ENCODE measurements at regions of chr16 and their contacts with region 1.

Region 1: DNA sequence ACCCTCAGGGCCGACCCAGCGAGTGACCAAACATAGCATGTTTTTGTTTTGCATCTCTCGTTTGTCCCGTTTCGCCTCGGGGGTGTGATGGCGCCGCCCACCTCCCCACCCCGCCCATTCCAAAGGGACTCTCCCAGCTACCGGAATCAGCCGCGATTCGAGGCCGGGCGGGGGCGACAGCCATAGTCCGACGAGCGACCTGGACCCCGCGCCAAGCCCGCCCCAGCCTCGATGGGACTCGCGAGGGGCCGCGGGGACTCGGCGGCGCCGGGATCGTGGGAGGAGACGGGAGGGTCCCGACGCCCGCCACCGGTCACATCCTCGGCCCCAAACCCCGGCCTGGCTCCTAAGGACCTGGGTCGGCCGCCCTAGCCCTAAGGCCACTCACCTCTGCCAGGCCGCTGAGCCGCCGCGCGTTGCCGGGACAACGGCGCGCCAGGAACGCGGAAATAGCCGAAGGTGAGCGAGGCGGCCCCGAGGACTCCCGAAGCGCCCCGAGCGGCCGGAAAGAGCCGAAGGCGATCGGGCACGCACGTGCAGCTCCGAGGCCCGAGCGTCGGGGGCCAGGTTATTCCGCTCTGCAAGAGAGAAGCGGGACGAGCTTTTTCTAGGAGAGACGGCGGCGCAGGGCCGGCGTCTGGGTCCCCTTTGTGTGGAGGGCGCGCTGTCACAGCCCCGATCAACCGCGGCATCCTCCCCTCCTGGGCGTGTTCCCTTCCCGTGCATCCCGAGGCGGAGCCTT is 1.4 kb downstream of the IFT140 start:
- DNase-seq: peak; percentile 84
- H3K4me3 ChIP-seq: peak overlapping the region; percentile 78 to 85 (median 83)
- H3K27ac ChIP-seq: peak overlapping the region; percentile 74
- H3K4me1 ChIP-seq: peaks cover 22% of the 10 kb centered on the region
- H3K27me3 ChIP-seq: no peaks in the 10 kb centered on the region
- CTCF ChIP-seq: no peak

Region 2: DNA sequence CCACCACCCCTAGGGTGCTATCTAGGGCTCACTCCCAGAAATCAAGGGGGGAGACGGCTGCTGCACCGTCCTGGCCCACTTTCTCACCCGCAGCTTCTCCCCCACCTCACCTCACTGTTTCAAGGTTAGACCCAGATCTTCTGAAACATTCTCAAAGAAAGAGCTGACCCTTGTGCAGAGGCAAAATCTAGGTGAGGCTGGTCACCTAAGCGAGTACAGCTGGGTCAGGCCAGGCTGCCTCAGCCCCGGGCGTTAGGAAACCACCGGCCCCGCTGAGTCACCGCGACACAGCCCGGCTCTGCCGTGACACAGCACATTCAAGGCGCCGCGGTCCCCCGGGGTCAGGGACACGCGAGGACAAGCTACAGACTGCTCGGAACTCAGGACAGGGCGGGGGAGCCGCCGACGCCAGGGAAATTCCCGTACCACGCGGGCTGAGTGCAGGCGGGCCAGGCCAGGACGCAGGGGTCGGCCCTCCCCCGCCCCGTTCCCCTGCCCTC is 231.6 kb before region 1 on chr16:
- CTCF ChIA-PET with region 1: no interaction called
- dilution Hi-C with region 1: no loop called
- in situ Hi-C with region 1: no loop called
- intact Hi-C with region 1: loop called (anchors 10 kb)
- DNase-seq: peak; percentile 85
- H3K4me3 ChIP-seq: peak overlapping the region; percentile 36 to 47 (median 45)
- H3K27ac ChIP-seq: peak overlapping the region; percentile 57
- H3K4me1 ChIP-seq: peaks cover 14% of the 10 kb centered on the region
- H3K27me3 ChIP-seq: no peaks in the 10 kb centered on the region
- CTCF ChIP-seq: no peak

Region 3: DNA sequence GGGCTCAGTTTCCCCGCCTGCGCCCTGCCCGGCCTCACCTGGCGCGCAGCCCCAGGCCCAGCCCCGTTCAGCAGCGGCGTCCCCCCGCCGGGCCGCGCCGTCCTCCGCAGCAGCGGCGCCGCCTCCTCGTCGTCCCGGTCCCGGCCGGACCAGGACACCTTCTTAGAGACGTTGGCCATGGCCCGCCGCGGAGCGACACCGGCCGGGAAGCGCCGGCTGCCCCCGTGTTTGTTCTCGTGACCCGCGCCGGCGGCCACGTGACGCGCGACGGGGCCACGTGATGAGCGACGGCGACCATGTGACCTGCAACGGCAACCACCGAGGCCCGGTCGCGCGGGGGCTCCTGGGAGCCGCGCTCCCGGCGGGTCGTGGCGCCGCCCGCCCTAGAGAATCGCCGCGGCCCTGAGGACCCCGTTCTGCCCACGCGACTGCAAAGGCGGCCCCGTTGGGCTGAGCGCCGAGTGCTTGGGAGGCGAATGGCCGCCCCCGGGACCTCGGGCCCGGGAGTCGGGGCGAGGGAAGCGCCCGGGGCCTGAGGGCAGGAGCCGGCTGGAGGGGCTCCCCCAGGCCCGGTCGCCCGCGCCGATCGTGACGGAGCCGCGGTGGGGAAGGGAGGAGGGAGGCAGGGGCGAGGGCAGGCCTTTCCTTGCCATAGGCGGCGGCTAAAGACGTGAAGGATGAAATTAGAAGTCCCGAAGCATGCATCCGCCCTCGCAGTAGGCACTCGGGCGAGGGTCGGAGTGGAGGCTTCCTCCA is 135.5 kb before region 1 on chr16 and contains the start of gene CLCN7:
- CTCF ChIA-PET with region 1: no interaction called
- dilution Hi-C with region 1: no loop called
- in situ Hi-C with region 1: no loop called
- intact Hi-C with region 1: no loop called
- DNase-seq: peak; percentile 80
- H3K4me3 ChIP-seq: peak within 1 kb of the TSS; percentile 66 to 77 (median 74)
- H3K27ac ChIP-seq: peak within 1 kb of the TSS; percentile 54
- H3K4me1 ChIP-seq: peaks cover 24% of the 10 kb centered on the region
- H3K27me3 ChIP-seq: no peaks in the 10 kb centered on the region
- CTCF ChIP-seq: no peak
- total RNA-seq, gene CLCN7: 52.9 to 66.2 TPM

Region 4: DNA sequence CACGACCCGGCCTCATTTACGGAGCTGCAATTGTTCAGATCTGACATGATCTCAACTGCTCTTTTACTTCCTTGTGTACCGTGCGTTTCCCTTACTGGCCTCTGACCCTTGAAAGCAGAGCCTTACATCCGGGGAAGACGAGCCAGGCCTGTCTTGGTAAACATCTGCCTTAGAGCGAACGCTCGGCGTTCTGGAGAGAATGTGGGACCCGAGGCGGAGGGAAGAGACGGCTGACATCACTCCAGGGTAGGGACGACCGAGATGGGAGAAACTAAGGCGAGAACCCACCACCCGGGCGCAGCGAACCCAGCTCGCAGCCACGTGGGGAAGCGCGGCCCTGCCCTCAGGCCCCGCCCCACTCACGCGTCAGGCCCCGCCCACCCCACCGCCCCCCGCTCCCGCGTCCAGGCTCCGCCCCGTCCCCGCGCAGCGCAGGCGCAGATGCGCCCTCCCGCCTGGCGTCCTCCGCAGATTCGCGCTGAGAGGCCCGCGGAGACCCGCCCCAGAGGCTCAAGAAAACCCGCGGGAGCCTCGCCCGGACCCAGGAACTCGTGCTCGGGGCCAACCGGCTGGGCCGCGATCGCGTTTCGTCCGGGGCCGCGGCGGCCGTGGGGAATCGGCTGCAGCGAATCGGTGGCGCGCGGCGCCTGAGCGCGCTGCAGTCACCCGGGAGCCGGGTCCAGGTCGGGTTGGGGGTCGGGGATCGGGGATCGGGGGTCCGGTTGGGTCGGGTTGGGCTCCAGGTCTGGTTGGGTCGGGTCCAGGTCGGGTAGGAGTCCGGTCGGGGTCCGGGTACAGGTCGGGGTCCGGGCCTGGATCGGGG is 117.3 kb before region 1 on chr16 and contains the start of gene TELO2:
- CTCF ChIA-PET with region 1: no interaction called
- dilution Hi-C with region 1: no loop called
- in situ Hi-C with region 1: no loop called
- intact Hi-C with region 1: loop called (anchors 2 kb)
- DNase-seq: peak; percentile 72
- H3K4me3 ChIP-seq: peak within 1 kb of the TSS; percentile 77 to 84 (median 82)
- H3K27ac ChIP-seq: peak within 1 kb of the TSS; percentile 41
- H3K4me1 ChIP-seq: peaks cover 21% of the 10 kb centered on the region
- H3K27me3 ChIP-seq: no peaks in the 10 kb centered on the region
- CTCF ChIP-seq: no peak
- total RNA-seq, gene TELO2: 12.7 to 37.7 TPM

Region 5: DNA sequence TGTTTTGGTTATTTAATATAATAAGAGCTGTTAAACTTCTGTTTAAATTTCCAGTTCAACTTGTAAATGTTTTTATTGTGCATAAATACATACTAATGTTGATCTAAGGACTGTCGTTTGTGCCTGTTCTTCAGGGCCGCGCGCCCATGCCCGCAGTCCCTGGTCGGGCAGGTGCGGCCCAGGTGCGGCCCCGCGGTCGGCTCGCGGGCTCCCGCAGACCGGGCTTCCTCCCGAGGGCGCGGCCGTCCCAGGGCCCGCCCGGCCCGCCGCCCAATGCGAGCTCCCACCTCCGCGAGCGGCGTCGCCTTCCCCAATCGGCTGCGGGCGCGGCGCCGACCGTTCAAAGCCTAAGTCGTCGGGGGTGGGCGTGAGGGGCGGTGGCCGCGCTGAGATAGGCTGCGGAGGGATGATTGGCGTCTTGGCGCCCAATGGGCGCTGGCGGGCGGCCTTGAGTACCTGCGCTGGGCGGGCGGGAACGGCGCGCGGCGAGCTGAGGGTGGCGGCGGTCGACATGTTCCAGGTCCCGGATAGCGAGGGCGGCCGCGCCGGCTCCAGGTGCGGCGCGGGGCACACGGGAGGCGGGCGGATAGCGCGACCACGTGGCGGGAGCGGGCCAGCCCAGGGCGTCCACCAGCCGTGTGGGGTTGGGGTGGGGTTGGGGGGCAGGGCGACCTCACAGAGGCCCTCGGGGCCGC is 67.5 kb after region 1 on chr16 and contains the start of gene JPT2:
- CTCF ChIA-PET with region 1: no interaction called
- dilution Hi-C with region 1: no loop called
- in situ Hi-C with region 1: no loop called
- intact Hi-C with region 1: loop called (anchors 10 kb)
- DNase-seq: peak; percentile 98
- H3K4me3 ChIP-seq: peak within 1 kb of the TSS; percentile 79 to 97 (median 97)
- H3K27ac ChIP-seq: peak within 1 kb of the TSS; percentile 88
- H3K4me1 ChIP-seq: peaks cover 33% of the 10 kb centered on the region
- H3K27me3 ChIP-seq: no peaks in the 10 kb centered on the region
- CTCF ChIP-seq: no peak
- total RNA-seq, gene JPT2: 53.0 to 117 TPM

Region 6: DNA sequence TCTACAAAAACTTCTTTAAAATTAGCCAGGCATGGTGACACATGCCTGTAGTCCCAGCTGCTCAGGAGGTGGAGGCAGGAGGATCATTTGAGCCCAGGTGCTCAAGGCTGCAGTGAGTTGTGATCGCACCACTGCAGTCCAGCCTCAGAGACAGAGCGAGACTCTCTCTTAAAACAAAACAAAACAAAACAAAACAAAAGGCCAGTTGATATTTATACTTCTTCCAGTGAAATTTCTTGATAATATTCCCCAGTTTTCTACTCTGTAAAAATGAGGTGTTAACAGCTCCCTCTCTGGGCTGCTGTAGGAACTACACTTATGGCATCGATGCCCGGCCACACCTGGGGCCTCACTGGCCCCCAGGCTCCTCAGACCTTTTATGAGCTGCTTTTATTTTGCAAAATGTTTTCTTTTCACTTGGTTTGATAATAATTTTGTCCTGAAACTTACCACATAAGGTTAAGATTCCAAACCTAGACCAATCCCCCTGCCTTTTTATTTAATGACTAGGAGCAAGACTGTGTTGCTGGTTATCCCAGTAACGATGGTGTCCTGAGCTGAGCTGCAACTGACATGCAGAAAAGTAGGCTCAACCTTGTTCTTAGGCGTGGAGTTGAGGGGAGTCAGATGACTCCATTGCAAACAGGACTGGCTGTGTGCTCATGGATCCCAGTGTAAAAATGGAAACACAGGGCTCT is 113.2 kb after region 1 on chr16:
- CTCF ChIA-PET with region 1: no interaction called
- dilution Hi-C with region 1: no loop called
- in situ Hi-C with region 1: no loop called
- intact Hi-C with region 1: loop called (anchors 1 kb)
- DNase-seq: peak; percentile 51
- H3K4me3 ChIP-seq: no peak overlapping the region
- H3K27ac ChIP-seq: no peak overlapping the region
- H3K4me1 ChIP-seq: peaks cover 5% of the 10 kb centered on the region
- H3K27me3 ChIP-seq: no peaks in the 10 kb centered on the region
- CTCF ChIP-seq: peak; percentile 79 to 80

Region 7: DNA sequence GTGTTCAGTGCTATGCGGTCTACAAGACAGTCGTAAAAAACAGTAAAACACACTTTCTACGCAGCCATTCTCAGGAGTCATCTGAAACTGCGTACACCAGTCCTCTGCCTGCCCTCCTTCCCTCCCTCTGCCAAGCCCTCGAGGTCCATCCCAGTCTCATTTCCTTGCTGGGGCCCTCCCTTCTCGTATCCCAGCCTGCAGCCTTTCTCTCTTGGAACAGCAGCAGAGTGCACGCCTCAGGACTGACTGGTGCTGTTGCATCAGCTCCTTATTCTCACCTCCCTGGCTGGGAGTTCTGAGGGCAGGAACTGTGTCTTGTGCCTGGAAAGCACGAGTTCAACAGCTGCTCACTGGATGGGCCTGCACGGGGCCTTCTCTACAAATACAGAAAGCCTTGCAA is 229.1 kb after region 1 on chr16:
- CTCF ChIA-PET with region 1: no interaction called
- dilution Hi-C with region 1: no loop called
- in situ Hi-C with region 1: no loop called
- intact Hi-C with region 1: no loop called
- DNase-seq: peak; percentile 31
- H3K4me3 ChIP-seq: no peak overlapping the region
- H3K27ac ChIP-seq: no peak overlapping the region
- H3K4me1 ChIP-seq: peaks cover 7% of the 10 kb centered on the region
- H3K27me3 ChIP-seq: no peaks in the 10 kb centered on the region
- CTCF ChIP-seq: no peak

Measured in mammary epithelial cell (primary cell).